Activated T-helper 2 cell treated with anti-CD3 and anti-CD28 coated beads, Interferon-gamma antibody, Interleukin-2, Interleukin-4, amounts not matched to agents 10 μg/mL and 5 μg/mL and 100 μg/mL, durations not matched to agents 14 hours and 24 hours and 36 hours (primary cell): ENCODE measurements at regions of chr11 and their contacts with region 1.

Region 1: DNA sequence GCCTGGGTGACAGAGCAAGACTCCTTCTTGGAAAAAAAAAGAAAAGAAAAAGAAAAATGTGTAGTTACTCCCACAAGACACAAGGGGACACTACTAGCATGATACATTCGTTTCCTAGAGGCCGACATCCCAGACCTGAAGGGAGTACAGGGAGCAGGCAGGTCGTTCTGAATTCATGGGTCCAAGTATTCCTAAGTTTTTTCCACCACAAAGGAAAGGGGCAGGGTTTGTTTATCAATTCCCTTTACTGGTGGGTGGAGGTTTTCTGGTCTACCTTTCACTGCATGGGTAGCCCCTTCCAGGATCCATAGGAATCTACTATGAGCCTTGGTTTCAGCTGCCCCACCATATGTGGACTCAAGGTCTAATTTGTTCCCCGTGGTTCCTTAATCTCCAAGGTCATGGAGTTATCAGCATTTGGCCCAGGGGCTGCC is 11.8 kb downstream of the TIGD3 start:
- DNase-seq: no peak
- H3K4me3 Mint-ChIP-seq: no peak overlapping the region
- H3K27ac Mint-ChIP-seq: no peak overlapping the region
- H3K4me1 Mint-ChIP-seq: peaks cover 6% of the 10 kb centered on the region
- H3K27me3 Mint-ChIP-seq: no peaks in the 10 kb centered on the region

Region 2: DNA sequence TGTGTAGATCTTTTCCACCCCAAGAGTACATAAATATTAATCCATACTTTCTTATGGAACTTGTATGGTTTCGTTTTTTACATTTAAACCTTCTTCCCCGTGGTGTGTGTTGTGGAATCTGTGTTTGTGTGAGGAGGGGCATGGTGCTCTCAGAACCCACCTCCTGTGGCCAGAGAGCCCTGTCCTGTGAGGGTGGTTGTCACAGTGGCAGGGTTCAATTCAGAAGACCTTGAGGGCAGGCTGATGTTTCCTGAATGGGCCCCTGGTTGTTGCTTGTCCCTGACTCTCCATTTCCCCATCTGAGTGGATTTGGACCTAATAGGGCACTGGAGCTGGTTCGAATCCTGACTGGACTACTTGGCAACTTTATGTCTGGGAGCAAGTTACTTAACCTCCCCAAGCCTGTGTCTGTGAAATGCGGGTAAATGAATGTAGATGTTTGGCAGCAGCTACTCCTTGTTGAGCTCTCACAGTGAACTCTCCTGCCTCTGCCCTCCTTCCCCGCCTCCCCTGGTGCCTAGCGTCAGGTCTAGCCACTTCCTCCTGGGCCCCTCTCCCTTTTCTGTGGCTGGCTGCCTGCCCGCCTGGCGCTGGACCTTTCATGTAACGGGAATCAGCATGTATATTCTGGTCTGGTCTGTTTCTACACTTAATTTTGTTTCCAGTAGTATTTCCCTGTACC is 63.5 kb after region 1 on chr11:
- intact Hi-C with region 1: loop called (anchors 2 kb)
- DNase-seq: no peak
- H3K4me3 Mint-ChIP-seq: peak overlapping the region; percentile 98
- H3K27ac Mint-ChIP-seq: peak overlapping the region; percentile 94
- H3K4me1 Mint-ChIP-seq: peaks cover 78% of the 10 kb centered on the region
- H3K27me3 Mint-ChIP-seq: no peaks in the 10 kb centered on the region

Region 3: GRCh38 chr11:65506770-65507505 is 140.6 kb after region 1 on chr11:
- intact Hi-C with region 1: loop called (anchors 1 kb)
- DNase-seq: no peak
- H3K4me3 Mint-ChIP-seq: peak overlapping the region; percentile 49
- H3K27ac Mint-ChIP-seq: peak overlapping the region; percentile 59
- H3K4me1 Mint-ChIP-seq: peaks cover 43% of the 10 kb centered on the region
- H3K27me3 Mint-ChIP-seq: no peaks in the 10 kb centered on the region